Activated CD8-positive, alpha-beta memory T cell treated with anti-CD3 and anti-CD28 coated beads, Interleukin-2, amount 10 ng/mL, durations not matched to agents 7 days and 5 days (primary cell): ENCODE measurements at regions of chr17 and their contacts with region 1.

Region 1: DNA sequence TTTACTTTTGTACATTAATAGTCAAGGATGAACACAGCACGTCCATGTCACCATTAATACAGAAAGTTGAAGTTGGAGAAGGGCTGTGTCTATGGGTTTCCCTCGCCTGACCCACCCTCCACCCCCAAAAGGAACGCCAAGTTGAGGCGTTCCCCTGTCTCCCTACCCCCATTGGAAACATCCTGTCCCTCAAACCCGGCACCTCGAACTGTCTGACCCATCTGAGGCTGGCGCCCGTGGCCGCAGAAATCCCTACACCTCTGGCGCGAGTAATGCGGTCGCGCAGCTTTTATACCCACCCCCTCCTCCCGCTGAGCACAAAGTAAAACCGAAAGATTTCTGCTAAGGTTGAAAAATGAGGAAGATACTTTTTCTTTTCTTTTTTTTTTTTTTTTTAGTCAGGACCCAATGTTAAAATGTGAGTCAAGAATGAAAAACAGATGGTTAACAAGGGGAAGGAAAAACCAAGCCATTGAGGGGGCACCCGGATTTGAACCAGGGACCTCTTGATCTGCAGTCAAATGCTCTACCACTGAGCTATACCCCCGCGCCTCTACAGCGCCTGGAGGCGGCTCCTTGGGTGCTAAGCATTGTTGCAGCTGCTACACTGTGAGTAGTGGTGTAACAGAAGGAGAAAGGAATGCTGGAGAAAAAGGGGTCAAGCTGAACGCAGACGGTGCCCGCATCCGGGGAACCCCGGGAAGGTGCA is 887 bp upstream of the LASP1 start:
- DNase-seq: peak; percentile 93
- ATAC-seq: peak; percentile 51
- H3K4me3 Mint-ChIP-seq: peak overlapping the region; percentile 88
- H3K27ac Mint-ChIP-seq: peak overlapping the region; percentile 92
- H3K4me1 Mint-ChIP-seq: peaks cover 44% of the 10 kb centered on the region
- H3K27me3 Mint-ChIP-seq: peaks cover 2% of the 10 kb centered on the region

Region 2: DNA sequence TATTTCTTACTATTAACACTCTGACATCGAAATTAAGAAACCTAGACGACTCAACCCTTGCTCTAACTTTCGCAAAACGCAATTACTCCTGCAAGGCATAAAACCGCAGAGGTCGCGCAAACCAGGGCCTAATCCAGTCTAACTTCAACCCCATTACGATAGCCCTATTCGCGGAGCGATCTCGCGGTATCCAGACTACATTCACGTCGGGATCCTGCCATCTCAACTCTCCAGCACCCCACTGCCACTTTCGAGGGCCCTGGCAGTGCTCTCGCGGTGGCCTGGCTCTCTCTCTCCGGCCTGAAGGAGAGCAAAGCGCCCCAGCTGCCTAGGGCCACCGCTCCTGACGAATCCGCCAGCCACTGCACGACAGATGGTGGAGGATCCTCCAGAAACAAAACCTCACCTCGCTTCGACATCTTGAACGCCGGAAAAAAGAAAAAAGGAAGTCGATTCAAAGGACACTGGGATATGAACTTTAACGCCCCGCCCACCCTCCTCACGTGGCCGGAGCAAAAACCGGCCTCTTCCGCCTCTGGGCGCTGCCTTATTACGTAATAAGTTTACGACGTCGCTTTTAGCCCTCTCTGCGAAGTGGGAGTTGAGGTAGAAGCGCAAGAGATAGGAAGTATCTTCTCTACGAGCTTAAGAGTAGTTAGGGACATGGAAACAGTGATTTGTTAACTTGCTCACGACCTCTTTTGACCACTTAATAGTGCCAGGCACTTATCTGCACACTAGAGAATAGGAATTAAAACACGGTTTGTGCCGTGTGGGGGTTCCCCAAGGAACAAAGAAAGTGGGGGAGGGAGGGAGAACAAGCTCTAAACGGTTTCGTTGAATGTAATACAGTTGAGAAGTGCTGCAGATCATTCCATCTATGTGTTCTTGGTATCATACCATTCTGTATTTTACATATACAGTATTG is 15.4 kb before region 1 on chr17 and contains the start of gene RPL23:
- CTCF ChIA-PET with region 1: interaction called, 52 read pairs
- DNase-seq: peak; percentile 96
- ATAC-seq: peak; percentile 88
- H3K4me3 Mint-ChIP-seq: peak within 1 kb of the TSS; percentile 97
- H3K27ac Mint-ChIP-seq: peak within 1 kb of the TSS; percentile 98
- H3K4me1 Mint-ChIP-seq: peaks cover 42% of the 10 kb centered on the region
- H3K27me3 Mint-ChIP-seq: no peaks in the 10 kb centered on the region
- total RNA-seq, gene RPL23: 831 to 1,130 TPM

Region 3: GRCh38 chr17:38879878-38880682 is 11.1 kb after region 1 on chr17:
- CTCF ChIA-PET with region 1: interaction called, 16 read pairs
- DNase-seq: no peak
- ATAC-seq: no peak
- H3K4me3 Mint-ChIP-seq: peak overlapping the region; percentile 34
- H3K27ac Mint-ChIP-seq: peak overlapping the region; percentile 87
- H3K4me1 Mint-ChIP-seq: peaks cover 86% of the 10 kb centered on the region
- H3K27me3 Mint-ChIP-seq: no peaks in the 10 kb centered on the region

Region 4: DNA sequence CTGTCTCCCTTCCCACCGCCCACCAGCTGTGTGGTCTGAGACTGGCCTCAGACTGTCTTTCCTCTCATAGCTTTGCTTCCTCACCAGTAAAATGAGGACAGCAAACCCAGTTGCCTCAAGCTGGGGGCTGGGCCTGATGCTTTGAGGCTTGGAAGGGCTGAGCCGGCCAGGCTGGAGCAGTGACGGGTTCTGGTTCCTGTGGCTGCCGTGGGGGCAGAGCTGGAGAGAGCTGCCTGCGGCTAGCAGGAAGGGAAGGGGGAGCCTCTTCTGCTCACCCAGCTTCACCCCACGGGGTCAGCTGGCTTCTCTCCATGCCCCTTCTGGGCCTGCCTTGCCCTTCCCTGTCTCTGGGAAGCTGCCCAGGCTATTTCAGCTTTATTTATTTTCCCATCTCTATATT is 24.6 kb after region 1 on chr17:
- CTCF ChIA-PET with region 1: interaction called, 88 read pairs
- DNase-seq: peak; percentile 86
- ATAC-seq: peak; percentile 63
- H3K4me3 Mint-ChIP-seq: no peak overlapping the region
- H3K27ac Mint-ChIP-seq: peak overlapping the region; percentile 83
- H3K4me1 Mint-ChIP-seq: peaks cover 91% of the 10 kb centered on the region
- H3K27me3 Mint-ChIP-seq: no peaks in the 10 kb centered on the region

Region 5: GRCh38 chr17:38898812-38899348 is 29.9 kb after region 1 on chr17:
- CTCF ChIA-PET with region 1: interaction called, 88 read pairs
- DNase-seq: peak; percentile 94
- ATAC-seq: peak; percentile 73
- H3K4me3 Mint-ChIP-seq: peak overlapping the region; percentile 70
- H3K27ac Mint-ChIP-seq: peak overlapping the region; percentile 98
- H3K4me1 Mint-ChIP-seq: peaks cover 74% of the 10 kb centered on the region
- H3K27me3 Mint-ChIP-seq: no peaks in the 10 kb centered on the region

Region 6: DNA sequence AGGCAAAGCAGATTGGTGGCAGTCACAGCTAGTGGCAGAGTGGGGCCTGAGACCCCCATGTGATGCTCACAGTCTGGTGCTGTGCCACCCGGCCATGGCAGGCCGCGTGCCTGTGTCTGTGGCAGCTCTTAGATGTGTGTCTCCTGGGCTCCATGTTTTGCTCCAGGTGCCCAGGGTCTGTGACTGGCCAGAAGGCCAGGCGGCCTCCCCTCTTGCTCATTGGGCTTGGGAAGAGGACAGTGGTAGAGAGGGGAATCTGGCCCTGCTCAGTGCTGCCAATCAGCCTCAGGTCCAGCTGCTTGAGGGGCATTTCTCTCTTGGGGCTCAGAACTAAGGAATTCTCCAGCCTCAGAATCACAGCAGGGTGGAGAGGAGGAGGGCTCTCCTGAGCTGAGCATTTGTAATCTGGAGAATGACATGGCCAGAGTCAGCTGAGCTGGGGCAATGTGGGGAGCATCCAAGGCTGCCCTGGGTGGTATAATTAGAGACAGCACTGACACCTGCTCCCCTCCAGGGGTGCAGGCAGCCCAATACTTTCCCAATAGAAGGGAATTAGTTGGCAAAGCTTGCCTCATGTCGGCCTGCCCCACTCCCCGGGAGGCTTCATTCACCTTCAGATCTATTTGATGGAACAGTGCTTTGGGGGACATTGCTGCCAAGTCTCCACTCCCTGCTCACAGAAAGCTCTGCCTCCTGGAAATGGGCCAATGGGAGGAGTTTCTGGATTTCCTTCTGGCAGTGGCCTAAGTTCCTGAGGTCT is 53.7 kb after region 1 on chr17:
- CTCF ChIA-PET with region 1: interaction called, 18 read pairs
- DNase-seq: peak; percentile 40
- ATAC-seq: no peak
- H3K4me3 Mint-ChIP-seq: no peak overlapping the region
- H3K27ac Mint-ChIP-seq: no peak overlapping the region
- H3K4me1 Mint-ChIP-seq: peaks cover 34% of the 10 kb centered on the region
- H3K27me3 Mint-ChIP-seq: no peaks in the 10 kb centered on the region